Right ventricle myocardium inferior (tissue), 1 donor: ENCODE measurements at regions of chr2 and their contacts with region 1.

Region 1: GRCh38 chr2:237026981-237027711 is 58.5 kb upstream of the COPS8 start:
- DNase-seq: peak; percentile 80
- ATAC-seq: peak; percentile 87

Region 2: DNA sequence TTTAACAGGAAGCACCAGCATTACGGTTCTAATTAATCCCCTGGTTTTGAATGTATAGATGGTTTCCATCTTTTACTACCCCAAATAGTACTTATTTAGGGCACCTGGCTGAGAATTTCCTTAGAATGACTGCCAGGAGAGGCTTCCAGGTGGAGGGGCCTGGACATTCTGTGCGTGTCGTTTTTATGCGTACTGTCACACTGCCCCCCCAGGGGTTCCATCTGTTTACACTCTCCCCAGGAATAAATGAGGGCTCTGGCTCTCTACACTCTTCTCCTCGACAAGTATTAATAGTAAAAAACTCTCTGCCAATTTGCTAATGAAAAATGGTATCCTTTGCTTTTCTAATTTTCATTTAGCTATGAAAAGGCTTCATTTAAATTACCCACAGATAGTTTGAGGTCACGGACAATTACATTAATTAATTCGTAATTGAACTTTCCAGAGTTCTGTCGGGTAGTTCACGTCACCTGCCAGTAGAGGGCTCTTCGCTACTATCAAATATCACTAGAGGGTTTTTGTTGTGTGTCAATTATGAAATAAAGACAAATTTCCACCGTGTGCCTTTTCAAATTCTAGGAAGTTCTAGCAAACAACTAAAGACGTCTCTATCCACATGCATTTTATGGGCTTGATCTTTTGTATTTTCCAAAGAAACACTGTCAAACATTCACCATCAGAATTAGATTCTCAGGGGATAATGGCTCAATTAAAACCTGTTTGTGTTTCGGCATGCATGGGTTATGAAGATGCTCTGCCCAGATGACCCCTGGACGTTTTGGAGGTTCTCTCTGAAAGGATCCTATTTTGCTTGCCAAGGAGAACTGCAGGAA is 674.2 kb before region 1 on chr2:
- intact Hi-C with region 1: loop called (anchors 1 kb)
- DNase-seq: no peak
- ATAC-seq: no peak

Region 3: GRCh38 chr2:236803621-236804020 is 223.5 kb before region 1 on chr2:
- intact Hi-C with region 1: no loop called
- DNase-seq: no peak
- ATAC-seq: no peak